ENCODE measurements at regions of chr5 and their contacts with region 1.

Region 1: DNA sequence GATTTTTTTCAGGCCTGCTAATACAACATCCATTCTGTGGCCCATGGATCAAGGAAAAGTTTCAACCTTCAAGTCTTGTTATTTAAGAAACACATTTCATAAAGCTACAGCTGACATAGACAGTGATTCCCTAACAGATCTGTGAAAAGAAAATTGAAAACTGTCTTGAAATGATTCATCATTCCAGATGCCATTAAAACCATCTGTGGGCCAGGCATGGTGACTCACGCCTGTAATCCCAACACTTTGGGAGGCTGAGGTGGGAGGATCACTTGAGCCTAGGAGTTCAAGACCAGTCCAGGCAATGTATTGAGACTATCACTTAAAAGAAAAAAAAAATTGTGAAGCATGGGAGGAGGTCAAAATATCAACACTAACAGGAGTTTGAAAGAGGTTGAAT is 6.0 kb downstream of the RAPGEF6 start:
- DNase-seq: peak; percentile 64
- H3K4me3 ChIP-seq: no peak overlapping the region
- H3K27ac ChIP-seq: no peak overlapping the region
- H3K4me1 ChIP-seq: peaks cover 26% of the 10 kb centered on the region
- H3K27me3 ChIP-seq: no peaks in the 10 kb centered on the region
- CTCF ChIP-seq: no peak

Region 2: DNA sequence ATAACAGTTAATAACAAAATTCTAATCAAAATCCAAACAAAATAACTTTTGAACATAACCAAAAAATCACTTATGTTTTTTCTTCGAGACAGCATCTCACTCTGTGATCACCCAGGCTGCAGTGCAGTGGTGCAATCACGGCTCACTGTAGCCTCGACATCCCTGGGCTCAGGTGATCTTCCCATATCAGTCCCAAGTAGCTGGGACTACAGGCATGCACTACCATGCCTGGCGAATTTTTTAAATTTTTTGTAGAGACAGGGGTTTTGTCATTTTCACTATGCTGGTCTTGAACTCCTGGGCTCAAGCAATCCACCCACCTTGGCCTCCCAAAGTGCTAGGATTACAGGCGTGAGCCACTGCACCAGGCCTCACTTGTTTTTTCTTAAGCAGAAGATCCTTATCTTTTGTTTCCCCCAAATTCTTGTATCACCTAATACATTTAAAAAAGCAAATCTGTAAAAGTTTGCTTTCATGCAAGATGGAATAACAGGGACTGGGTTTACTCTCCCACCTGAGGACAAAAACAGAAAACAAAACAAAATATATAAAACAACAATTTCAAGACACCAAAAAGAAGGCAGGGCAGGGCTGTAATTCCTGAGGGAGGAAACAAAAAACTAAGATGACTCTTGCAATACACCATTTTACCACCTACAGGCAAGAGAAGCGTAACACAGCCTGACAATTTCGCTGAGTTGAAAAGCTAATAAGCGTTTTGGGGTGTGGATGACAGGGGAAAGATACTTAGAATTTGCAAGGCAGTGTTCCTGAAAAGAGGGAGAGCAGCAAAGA is 65.4 kb before region 1 on chr5:
- CTCF ChIA-PET with region 1: no interaction called
- dilution Hi-C with region 1: loop called (anchors 5 kb)
- in situ Hi-C with region 1: no loop called
- intact Hi-C with region 1: no loop called
- DNase-seq: no peak
- H3K4me3 ChIP-seq: no peak overlapping the region
- H3K27ac ChIP-seq: no peak overlapping the region
- H3K4me1 ChIP-seq: no peaks in the 10 kb centered on the region
- H3K27me3 ChIP-seq: no peaks in the 10 kb centered on the region
- CTCF ChIP-seq: no peak

Region 3: DNA sequence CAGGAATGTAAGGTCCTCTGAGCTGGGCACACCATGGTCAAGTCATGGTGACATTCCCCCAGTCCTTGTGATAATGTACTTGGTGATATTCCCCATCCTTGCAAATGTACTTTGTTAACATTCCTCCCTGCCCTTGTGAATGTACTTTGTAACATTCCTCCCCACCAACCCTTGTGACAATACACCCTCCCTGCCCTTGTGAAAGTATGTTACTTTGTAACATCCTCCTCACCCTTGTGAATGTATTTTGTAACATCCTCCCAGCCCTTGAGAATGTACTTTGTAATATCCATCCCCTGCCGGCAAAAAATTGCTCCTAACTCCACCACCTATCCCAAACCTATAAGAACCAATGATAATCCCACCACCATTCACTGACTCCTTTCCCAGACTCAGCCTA is 47.3 kb before region 1 on chr5:
- CTCF ChIA-PET with region 1: no interaction called
- dilution Hi-C with region 1: no loop called
- in situ Hi-C with region 1: no loop called
- intact Hi-C with region 1: no loop called
- DNase-seq: no peak
- H3K4me3 ChIP-seq: no peak overlapping the region
- H3K27ac ChIP-seq: no peak overlapping the region
- H3K4me1 ChIP-seq: peaks cover 2% of the 10 kb centered on the region
- H3K27me3 ChIP-seq: no peaks in the 10 kb centered on the region
- CTCF ChIP-seq: no peak